Activated B cell treated with CpG ODN at 0.5 μM for 24 hours (primary cell): ENCODE measurements at regions of chr2 and their contacts with region 1.

Region 1: GRCh38 chr2:48205137-48205798 is 299.0 kb upstream of the FBXO11 start:
- DNase-seq: no peak
- ATAC-seq: peak; percentile 94
- H3K4me3 Mint-ChIP-seq: peak overlapping the region; percentile 39
- H3K27ac Mint-ChIP-seq: peak overlapping the region; percentile 74
- H3K4me1 Mint-ChIP-seq: peaks cover 25% of the 10 kb centered on the region
- H3K27me3 Mint-ChIP-seq: no peaks in the 10 kb centered on the region
- CTCF ChIP-seq: no peak

Region 2: GRCh38 chr2:47870641-47871540 is 334.4 kb before region 1 on chr2:
- CTCF ChIA-PET with region 1: no interaction called
- POLR2A ChIA-PET with region 1: no interaction called
- intact Hi-C with region 1: no loop called
- DNase-seq: no peak
- ATAC-seq: no peak
- H3K4me3 Mint-ChIP-seq: peak overlapping the region; percentile 16
- H3K27ac Mint-ChIP-seq: no peak overlapping the region
- H3K4me1 Mint-ChIP-seq: peaks cover 65% of the 10 kb centered on the region
- H3K27me3 Mint-ChIP-seq: no peaks in the 10 kb centered on the region
- CTCF ChIP-seq: no peak

Region 3: GRCh38 chr2:48066000-48066399 is 139.3 kb before region 1 on chr2:
- CTCF ChIA-PET with region 1: no interaction called
- POLR2A ChIA-PET with region 1: no interaction called
- intact Hi-C with region 1: no loop called
- DNase-seq: no peak
- ATAC-seq: no peak
- H3K4me3 Mint-ChIP-seq: no peak overlapping the region
- H3K27ac Mint-ChIP-seq: no peak overlapping the region
- H3K4me1 Mint-ChIP-seq: peaks cover 2% of the 10 kb centered on the region
- H3K27me3 Mint-ChIP-seq: peaks cover 10% of the 10 kb centered on the region
- CTCF ChIP-seq: no peak

Region 4: GRCh38 chr2:48420512-48421197 is 215.4 kb after region 1 on chr2:
- CTCF ChIA-PET with region 1: interaction called, 6 read pairs
- POLR2A ChIA-PET with region 1: no interaction called
- intact Hi-C with region 1: loop called (anchors 1 kb)
- DNase-seq: peak; percentile 80
- ATAC-seq: peak; percentile 91
- H3K4me3 Mint-ChIP-seq: peak overlapping the region; percentile 4
- H3K27ac Mint-ChIP-seq: no peak overlapping the region
- H3K4me1 Mint-ChIP-seq: peaks cover 14% of the 10 kb centered on the region
- H3K27me3 Mint-ChIP-seq: peaks cover 8% of the 10 kb centered on the region
- CTCF ChIP-seq: peak; percentile 66